H1 (cell line): ENCODE measurements at regions of chr2 and their contacts with region 1.

Region 1: GRCh38 chr2:240604291-240604938 is 17.9 kb downstream of the CAPN10 start:
- DNase-seq: peak in 1 of 2 experiments; percentile 27
- H3K4me3 ChIP-seq: no peak overlapping the region
- H3K27ac ChIP-seq: no peak overlapping the region
- H3K4me1 ChIP-seq: no peaks in the 10 kb centered on the region
- H3K27me3 ChIP-seq: 0 out of 7 replicates have a peak, but pooled peaks cover 0 to 2% (median 0%) of the 10 kb centered on the region in 4 experiments
- CTCF ChIP-seq: peak in 2 of 3 experiments; percentile 66 to 85; a peak in 3 of 4 replicates
- EP300 ChIP-seq: no peak
- POLR2A ChIP-seq: no peak
- RAD21 ChIP-seq: peak; percentile 42 to 56; a peak in 3 of 4 replicates

Region 2: DNA sequence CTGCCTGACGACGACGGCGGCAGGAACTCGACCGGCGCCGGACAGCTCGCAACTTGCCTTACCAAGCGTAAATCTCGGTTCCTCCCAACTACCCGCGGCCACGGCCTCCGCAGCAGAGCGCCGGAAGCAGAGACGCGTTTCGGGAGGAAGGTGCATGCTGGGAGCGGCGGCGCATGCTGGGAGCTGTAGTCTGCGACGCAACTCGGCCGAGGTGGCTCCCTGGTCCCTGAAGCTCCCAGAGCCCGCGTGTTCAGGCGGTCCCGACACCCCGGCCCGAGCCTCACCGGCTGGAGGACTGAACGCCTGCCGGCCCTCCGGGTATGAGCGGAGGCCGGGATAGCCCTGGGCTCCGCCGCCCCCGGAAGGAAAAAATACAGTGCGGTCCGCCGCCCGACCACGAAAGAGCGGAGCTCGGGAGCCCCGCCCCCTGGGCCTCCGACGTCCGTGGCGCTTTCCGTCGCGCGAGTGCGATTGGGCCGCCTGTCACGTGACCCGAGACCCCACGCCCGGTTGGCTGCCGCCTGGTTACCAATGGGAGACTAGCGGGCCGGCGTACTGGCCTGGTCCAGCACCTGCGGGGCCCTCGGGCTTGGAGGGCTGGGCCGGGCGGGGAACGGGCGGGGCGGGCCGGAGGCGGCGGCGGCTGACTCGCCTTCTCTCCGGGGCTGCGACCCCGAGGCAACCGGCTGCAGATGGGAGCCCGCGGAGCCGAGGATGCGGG is 18.1 kb before region 1 on chr2 and contains the start of gene CAPN10:
- CTCF ChIA-PET with region 1: interaction called, 12 read pairs
- POLR2A ChIA-PET with region 1: interaction called, 5 read pairs
- DNase-seq: peak in 1 of 2 experiments; percentile 97
- H3K4me3 ChIP-seq: peak within 1 kb of the TSS; percentile 94 to 97 (median 95)
- H3K27ac ChIP-seq: no peak within 1 kb of the TSS
- H3K4me1 ChIP-seq: peaks cover 0 to 14% (median 11%) of the 10 kb centered on the region in 4 experiments; a peak in 6 of 7 replicates
- H3K27me3 ChIP-seq: no peaks in the 10 kb centered on the region
- CTCF ChIP-seq: no peak; a peak in 1 of 4 replicates
- EP300 ChIP-seq: no peak
- POLR2A ChIP-seq: no peak
- RAD21 ChIP-seq: no peak
- total RNA-seq, gene CAPN10: 39.8 and 40.7 TPM in 2 replicates